ENCODE measurements at regions of chr17 and their contacts with region 1.

Region 1: DNA sequence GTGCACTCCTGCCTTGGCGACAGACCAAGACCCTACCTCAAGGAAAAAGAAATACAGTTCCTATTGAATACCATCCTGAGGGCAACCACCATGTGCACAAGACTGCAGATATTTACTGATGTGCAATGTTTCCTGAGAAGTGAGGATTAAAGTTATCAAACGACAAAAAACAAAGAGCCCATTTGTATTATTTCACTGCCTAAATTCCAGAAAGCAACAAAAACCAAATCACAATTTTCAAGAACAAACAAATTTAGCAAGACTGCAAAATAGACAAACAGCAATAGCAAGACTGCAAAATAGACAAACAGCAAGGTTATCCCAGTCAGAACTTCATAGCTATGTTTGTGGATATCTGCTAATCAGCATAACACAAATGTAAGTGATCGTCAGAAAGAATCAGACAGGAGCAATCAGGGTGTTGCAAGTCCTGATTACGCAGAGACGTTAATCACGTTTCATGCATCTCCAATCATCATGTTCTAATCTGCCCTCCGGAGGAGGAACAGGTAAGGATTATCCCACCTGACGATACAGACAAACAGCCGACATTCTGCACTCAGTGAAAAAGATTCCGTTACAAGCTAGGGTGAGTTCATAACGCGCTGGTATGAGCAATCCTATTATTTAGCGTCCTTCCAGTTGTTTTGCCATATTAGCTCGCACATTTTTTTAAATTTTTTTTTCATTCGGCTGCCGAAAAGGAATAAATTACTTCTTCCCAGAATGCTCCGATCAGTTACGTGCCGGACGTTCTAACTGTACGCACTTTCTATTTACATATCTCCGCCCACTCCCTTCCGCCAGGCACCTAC is 2.9 kb downstream of the TMEM107 start:
- DNase-seq: no peak
- H3K4me3 ChIP-seq: peak overlapping the region; percentile 27 to 68 (median 51)
- H3K27ac ChIP-seq: peak overlapping the region; percentile 99
- H3K4me1 ChIP-seq: peaks cover 3 to 13% (median 8%) of the 10 kb centered on the region in 4 experiments
- H3K27me3 ChIP-seq: no peaks in the 10 kb centered on the region
- CTCF ChIP-seq: no peak
- EP300 ChIP-seq: peak in 1 of 2 experiments; percentile 57; a peak in 1 of 3 replicates
- POLR2A ChIP-seq: peak; percentile 100
- RAD21 ChIP-seq: 0 out of 4 replicates have a peak, but pooled peaks of 1 of the 2 experiments have one; percentile 0

Region 2: GRCh38 chr17:7931709-7932482 is 241.4 kb before region 1 on chr17 and contains the starts of genes CNTROB and TRAPPC1:
- CTCF ChIA-PET with region 1: no interaction called
- POLR2A ChIA-PET with region 1: no interaction called
- DNase-seq: peak; percentile 90 to 98
- H3K4me3 ChIP-seq: peak within 1 kb of the TSS; percentile 80 to 95 (median 89)
- H3K27ac ChIP-seq: peak within 1 kb of the TSS; percentile 16; the same call in 1 of the 2 replicates
- H3K4me1 ChIP-seq: peaks cover 0 to 5% (median 3%) of the 10 kb centered on the region in 4 experiments; a peak in 4 of 7 replicates
- H3K27me3 ChIP-seq: peaks cover 11 to 28% (median 25%) of the 10 kb centered on the region in 4 experiments
- CTCF ChIP-seq: peak in 1 of 3 experiments; percentile 6; a peak in 1 of 4 replicates
- EP300 ChIP-seq: no peak
- POLR2A ChIP-seq: no peak
- RAD21 ChIP-seq: no peak
- total RNA-seq, gene CNTROB: 30.0 and 31.9 TPM in 2 replicates
- total RNA-seq, gene TRAPPC1: 99.3 and 114 TPM in 2 replicates

Region 3: GRCh38 chr17:8109661-8110464 is 63.4 kb before region 1 on chr17:
- CTCF ChIA-PET with region 1: interaction called, 4 read pairs
- POLR2A ChIA-PET with region 1: interaction called, 13 read pairs
- DNase-seq: peak in 1 of 2 experiments; percentile 92
- H3K4me3 ChIP-seq: peak overlapping the region; percentile 39 to 69 (median 67)
- H3K27ac ChIP-seq: no peak overlapping the region
- H3K4me1 ChIP-seq: peaks cover 0 to 13% (median 3%) of the 10 kb centered on the region in 4 experiments; a peak in 5 of 7 replicates
- H3K27me3 ChIP-seq: peaks cover 3 to 47% (median 35%) of the 10 kb centered on the region in 4 experiments
- CTCF ChIP-seq: peak; percentile 84 to 94 (median 90)
- EP300 ChIP-seq: no peak
- POLR2A ChIP-seq: no peak
- RAD21 ChIP-seq: peak; percentile 72 to 84

Region 4: GRCh38 chr17:8125157-8125946 is 47.9 kb before region 1 on chr17:
- CTCF ChIA-PET with region 1: no interaction called
- POLR2A ChIA-PET with region 1: interaction called, 33 read pairs
- DNase-seq: peak in 1 of 2 experiments; percentile 99
- H3K4me3 ChIP-seq: peak overlapping the region; percentile 54 to 89 (median 82)
- H3K27ac ChIP-seq: no peak overlapping the region
- H3K4me1 ChIP-seq: peaks cover 0 to 24% (median 13%) of the 10 kb centered on the region in 4 experiments; a peak in 6 of 7 replicates
- H3K27me3 ChIP-seq: peaks cover 30 to 54% (median 51%) of the 10 kb centered on the region in 4 experiments
- CTCF ChIP-seq: no peak
- EP300 ChIP-seq: no peak
- POLR2A ChIP-seq: no peak
- RAD21 ChIP-seq: no peak

Region 5: GRCh38 chr17:8138672-8139371 is 34.4 kb before region 1 on chr17:
- CTCF ChIA-PET with region 1: interaction called, 9 read pairs
- POLR2A ChIA-PET with region 1: interaction called, 34 read pairs
- DNase-seq: peak; percentile 94 to 100
- H3K4me3 ChIP-seq: peak overlapping the region; percentile 86 to 98 (median 92)
- H3K27ac ChIP-seq: peak overlapping the region; percentile 81
- H3K4me1 ChIP-seq: peaks cover 0 to 7% (median 4%) of the 10 kb centered on the region in 4 experiments; a peak in 4 of 7 replicates
- H3K27me3 ChIP-seq: peaks cover 0 to 7% (median 2%) of the 10 kb centered on the region in 4 experiments; a peak in 4 of 7 replicates
- CTCF ChIP-seq: peak; percentile 63 to 96 (median 78)
- EP300 ChIP-seq: peak in 1 of 2 experiments; percentile 89; a peak in 1 of 3 replicates
- POLR2A ChIP-seq: peak in 1 of 2 experiments; percentile 59; a peak in 1 of 3 replicates
- RAD21 ChIP-seq: peak; percentile 58 to 62

Region 6: GRCh38 chr17:8151123-8151640 is 22.1 kb before region 1 on chr17:
- CTCF ChIA-PET with region 1: interaction called, 4 read pairs
- POLR2A ChIA-PET with region 1: interaction called, 289 read pairs
- DNase-seq: peak in 1 of 2 experiments; percentile 81
- H3K4me3 ChIP-seq: peak overlapping the region; percentile 79 to 93 (median 84)
- H3K27ac ChIP-seq: no peak overlapping the region
- H3K4me1 ChIP-seq: peaks cover 12 to 31% (median 19%) of the 10 kb centered on the region in 4 experiments
- H3K27me3 ChIP-seq: no peaks in the 10 kb centered on the region
- CTCF ChIP-seq: no peak
- EP300 ChIP-seq: no peak
- POLR2A ChIP-seq: no peak
- RAD21 ChIP-seq: no peak

Region 7: DNA sequence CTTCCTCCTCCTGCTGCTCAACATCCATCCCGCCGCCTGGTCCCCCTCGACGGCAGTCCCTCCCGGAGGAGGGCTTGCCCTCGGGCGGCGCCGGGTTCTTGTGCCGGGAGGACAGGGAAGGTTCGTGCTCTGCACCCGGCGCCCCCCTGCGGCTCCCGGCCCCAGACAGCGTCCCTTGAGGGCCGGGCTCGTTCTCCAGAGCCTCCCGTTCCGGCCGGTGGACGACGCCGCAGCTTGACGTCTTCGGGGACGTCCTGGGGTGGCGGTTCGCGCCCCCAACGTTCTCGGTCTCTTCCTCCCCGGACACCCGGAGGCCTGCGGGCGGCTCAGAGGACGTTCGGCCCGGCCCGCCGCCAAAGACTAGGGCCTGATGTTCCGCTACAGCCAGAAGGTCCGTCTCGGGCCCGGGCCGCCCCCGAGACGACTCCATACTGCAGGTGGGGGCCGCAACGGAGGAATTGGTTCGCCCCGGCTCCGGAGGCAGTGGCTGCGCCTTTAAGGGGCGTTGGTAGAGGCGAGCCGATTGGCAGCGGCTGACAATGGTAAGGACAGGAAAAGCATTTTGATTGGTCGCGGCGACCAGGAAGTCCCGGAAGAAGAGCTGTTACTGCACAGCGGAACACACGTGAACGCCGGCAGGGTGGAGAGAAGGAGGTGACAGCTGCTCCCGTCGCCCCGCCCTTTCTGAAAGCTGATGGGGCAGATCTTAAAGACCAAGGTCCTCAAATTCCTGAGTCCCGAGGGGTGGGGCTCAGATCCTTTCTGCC is 16.6 kb after region 1 on chr17 and contains the start of gene BORCS6:
- CTCF ChIA-PET with region 1: interaction called, 7 read pairs
- POLR2A ChIA-PET with region 1: interaction called, 70 read pairs
- DNase-seq: peak; percentile 87
- H3K4me3 ChIP-seq: peak within 1 kb of the TSS; percentile 59 to 89 (median 78)
- H3K27ac ChIP-seq: no peak within 1 kb of the TSS
- H3K4me1 ChIP-seq: peaks cover 4 to 21% (median 10%) of the 10 kb centered on the region in 4 experiments; a peak in 6 of 7 replicates
- H3K27me3 ChIP-seq: peaks cover 2 to 17% (median 11%) of the 10 kb centered on the region in 4 experiments
- CTCF ChIP-seq: no peak
- EP300 ChIP-seq: no peak
- POLR2A ChIP-seq: no peak
- RAD21 ChIP-seq: no peak
- total RNA-seq, gene BORCS6: 3.6 and 4.6 TPM in 2 replicates

Region 8: DNA sequence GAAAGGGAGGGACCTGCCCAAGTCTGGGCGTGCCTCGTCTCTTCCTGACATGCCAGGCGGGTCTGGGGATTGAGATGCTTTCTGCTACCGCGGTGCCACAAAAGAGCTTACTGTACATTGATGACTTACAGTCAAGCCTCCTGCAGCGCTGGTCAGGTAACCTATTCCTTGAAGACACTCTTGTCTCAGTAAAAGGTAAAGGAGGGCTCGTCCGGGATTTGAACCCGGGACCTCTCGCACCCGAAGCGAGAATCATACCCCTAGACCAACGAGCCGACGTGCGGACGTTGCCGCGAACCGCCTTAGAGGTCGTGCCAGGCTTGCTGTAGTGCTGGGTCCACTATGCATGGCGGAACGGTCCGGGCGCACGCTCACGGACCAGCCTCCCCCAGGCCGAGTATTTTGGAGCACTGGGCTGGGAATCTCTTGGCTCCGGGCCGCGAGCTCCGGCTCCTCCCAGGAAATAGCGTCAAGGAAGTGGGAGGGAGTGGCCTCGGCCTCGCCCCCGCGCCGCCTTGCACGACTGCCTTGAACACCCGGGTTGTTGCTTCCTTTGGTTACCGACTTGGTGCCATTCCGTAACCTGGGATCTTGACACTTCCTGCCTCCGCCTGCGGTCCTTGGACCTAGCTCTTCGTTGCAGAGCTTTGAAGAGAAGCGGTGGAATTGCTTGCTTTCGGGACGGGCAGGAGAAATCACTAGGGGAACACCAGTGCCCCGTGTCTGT is 49.5 kb after region 1 on chr17:
- CTCF ChIA-PET with region 1: no interaction called
- POLR2A ChIA-PET with region 1: interaction called, 57 read pairs
- DNase-seq: peak; percentile 83 to 98
- H3K4me3 ChIP-seq: peak overlapping the region; percentile 67 to 97 (median 88)
- H3K27ac ChIP-seq: peak overlapping the region; percentile 84; the same call in 1 of the 2 replicates
- H3K4me1 ChIP-seq: peaks cover 0 to 15% (median 2%) of the 10 kb centered on the region in 4 experiments; a peak in 4 of 7 replicates
- H3K27me3 ChIP-seq: no peaks in the 10 kb centered on the region
- CTCF ChIP-seq: no peak
- EP300 ChIP-seq: no peak
- POLR2A ChIP-seq: peak in 1 of 2 experiments; percentile 16; a peak in 1 of 3 replicates
- RAD21 ChIP-seq: no peak

Region 9: DNA sequence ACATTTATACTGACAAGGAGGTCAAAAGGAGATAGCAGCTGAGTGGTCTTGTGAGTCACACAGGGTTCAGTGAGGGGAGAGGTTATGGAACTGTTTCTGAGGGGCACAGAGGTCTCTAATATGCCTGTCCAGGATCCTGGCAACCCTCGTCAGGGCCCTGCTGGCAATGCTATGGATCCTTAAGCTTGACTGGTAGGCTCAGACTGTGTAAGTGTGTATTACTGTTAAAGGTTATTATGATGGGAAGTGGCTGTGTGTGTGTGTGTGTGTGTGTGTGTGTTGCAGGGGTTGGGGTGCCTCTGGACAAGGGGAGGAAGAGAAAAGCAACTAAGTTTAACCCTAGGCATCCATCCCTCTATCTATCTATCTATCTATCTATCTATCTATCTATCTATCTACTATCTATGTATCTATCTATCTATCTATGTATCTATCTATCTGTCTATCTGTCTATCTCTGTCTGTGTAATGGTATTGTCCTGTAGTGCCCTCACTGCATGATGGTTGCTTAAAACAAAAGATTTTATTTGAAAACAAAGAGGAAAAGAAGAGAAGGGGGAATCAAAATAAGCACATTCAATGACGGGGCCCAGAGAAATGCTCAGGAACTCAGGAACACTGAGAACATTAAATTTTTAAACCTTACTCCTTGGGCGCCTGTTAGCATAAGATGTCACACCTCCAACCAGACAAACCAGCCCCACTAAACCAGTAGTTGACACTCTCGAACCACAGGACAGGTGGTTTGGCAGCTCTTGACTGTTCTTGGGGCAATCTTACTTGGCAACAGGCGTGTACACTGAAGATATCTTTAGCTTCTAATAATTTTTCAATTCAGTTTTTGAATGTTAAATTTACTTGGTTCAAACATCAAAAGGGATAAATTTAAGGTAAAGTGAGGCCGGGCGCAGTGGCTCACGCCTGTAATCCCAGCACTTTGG is 214.7 kb after region 1 on chr17:
- CTCF ChIA-PET with region 1: no interaction called
- POLR2A ChIA-PET with region 1: no interaction called
- DNase-seq: no peak
- H3K4me3 ChIP-seq: no peak overlapping the region
- H3K27ac ChIP-seq: no peak overlapping the region
- H3K4me1 ChIP-seq: peaks cover 4 to 12% (median 7%) of the 10 kb centered on the region in 4 experiments
- H3K27me3 ChIP-seq: no peaks in the 10 kb centered on the region
- CTCF ChIP-seq: no peak
- EP300 ChIP-seq: no peak
- POLR2A ChIP-seq: no peak
- RAD21 ChIP-seq: no peak

Measured in H1 (cell line).